Left lung (tissue), 14 donors: ENCODE measurements at regions of chr7 and their contacts with region 1.

Region 1: GRCh38 chr7:70972693-70973092 is 159.3 kb upstream of the GALNT17 start:
- DNase-seq: no peak
- ATAC-seq: no peak
- H3K4me3 ChIP-seq: no peak overlapping the region
- H3K27ac ChIP-seq: no peak overlapping the region
- H3K4me1 ChIP-seq: no peaks in the 10 kb centered on the region
- H3K27me3 ChIP-seq: no peaks in the 10 kb centered on the region
- CTCF ChIP-seq: no peak

Region 2: DNA sequence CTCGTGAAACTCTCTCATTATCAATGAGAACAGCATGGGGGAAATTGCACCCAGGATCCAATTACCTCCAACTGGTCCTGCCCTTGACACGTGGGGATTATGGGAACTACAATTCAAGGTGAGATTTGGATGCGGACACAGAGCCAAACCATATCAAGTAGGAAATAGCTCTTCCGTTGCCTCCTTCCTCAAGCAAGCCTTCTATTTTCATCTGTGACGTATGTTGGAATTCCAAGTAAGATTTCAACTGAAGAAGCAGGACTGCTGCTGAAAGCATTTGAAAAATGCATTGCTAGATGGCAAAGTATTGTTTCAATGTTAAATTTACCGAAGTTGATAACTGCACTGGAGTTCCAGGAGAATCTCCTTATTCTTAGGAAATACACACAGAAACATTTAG is 18.9 kb before region 1 on chr7:
- intact Hi-C with region 1: loop called in 1 of 2 experiments (anchors 2 kb)
- DNase-seq: no peak
- ATAC-seq: no peak
- H3K4me3 ChIP-seq: no peak overlapping the region
- H3K27ac ChIP-seq: no peak overlapping the region
- H3K4me1 ChIP-seq: no peaks in the 10 kb centered on the region
- H3K27me3 ChIP-seq: no peaks in the 10 kb centered on the region
- CTCF ChIP-seq: no peak

Region 3: GRCh38 chr7:71364551-71364950 is 391.9 kb after region 1 on chr7:
- intact Hi-C with region 1: no loop called
- DNase-seq: no peak
- ATAC-seq: no peak
- H3K4me3 ChIP-seq: no peak overlapping the region
- H3K27ac ChIP-seq: no peak overlapping the region
- H3K4me1 ChIP-seq: no peaks in the 10 kb centered on the region
- H3K27me3 ChIP-seq: no peaks in the 10 kb centered on the region
- CTCF ChIP-seq: no peak